ENCODE measurements at regions of chr9 and their contacts with region 1.

Region 1: DNA sequence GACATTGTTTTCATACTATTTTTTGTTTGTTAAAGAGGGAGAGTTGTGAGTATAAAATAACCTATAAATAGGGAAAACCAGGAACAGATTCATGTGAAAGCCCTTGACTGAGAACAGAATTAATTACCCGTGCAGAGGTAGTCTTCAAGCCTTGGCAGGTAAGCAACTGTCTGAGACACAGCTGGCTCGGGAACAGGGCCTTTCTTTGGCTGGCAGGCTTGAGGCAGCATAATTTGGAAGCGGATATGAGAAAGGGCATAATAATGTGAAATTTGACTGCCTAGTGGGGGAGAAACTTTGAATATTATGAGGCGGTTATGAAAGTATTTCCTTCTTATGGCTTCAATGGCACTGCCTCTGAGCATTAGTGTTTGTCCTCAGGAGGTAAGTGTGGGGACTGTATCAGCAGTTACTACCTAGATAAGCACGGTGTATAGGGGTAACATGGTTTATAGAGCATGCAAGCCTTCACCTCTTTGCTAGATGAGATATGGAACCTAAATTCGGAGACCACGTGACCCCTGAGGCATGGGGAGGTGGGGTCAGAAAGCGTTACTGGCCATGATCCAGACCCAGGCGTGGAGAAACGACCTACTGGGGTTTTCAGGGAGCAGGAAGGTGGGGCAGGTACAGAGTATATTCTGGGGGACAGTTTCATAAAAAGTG is 210.2 kb upstream of the GAS1 start:
- DNase-seq: peak in 1 of 2 donors; percentile 71
- H3K4me3 ChIP-seq: no peak overlapping the region
- H3K27ac ChIP-seq: peak overlapping the region; percentile 41 to 60
- H3K4me1 ChIP-seq: peaks cover 3 to 7% of the 10 kb centered on the region in 2 donors
- H3K27me3 ChIP-seq: no peaks in the 10 kb centered on the region
- CTCF ChIP-seq: no peak

Region 2: GRCh38 chr9:86714999-86715398 is 442.5 kb before region 1 on chr9:
- intact Hi-C with region 1: loop called (anchors 10 kb)
- DNase-seq: no peak
- H3K4me3 ChIP-seq: no peak overlapping the region
- H3K27ac ChIP-seq: no peak overlapping the region
- H3K4me1 ChIP-seq: peaks cover 0 to 3% of the 10 kb centered on the region in 2 donors
- H3K27me3 ChIP-seq: no peaks in the 10 kb centered on the region
- CTCF ChIP-seq: no peak

Measured in ascending aorta (tissue), 2 donors.